Right lobe of liver (tissue), 6 donors: ENCODE measurements at regions of chr5 and their contacts with region 1.

Region 1: DNA sequence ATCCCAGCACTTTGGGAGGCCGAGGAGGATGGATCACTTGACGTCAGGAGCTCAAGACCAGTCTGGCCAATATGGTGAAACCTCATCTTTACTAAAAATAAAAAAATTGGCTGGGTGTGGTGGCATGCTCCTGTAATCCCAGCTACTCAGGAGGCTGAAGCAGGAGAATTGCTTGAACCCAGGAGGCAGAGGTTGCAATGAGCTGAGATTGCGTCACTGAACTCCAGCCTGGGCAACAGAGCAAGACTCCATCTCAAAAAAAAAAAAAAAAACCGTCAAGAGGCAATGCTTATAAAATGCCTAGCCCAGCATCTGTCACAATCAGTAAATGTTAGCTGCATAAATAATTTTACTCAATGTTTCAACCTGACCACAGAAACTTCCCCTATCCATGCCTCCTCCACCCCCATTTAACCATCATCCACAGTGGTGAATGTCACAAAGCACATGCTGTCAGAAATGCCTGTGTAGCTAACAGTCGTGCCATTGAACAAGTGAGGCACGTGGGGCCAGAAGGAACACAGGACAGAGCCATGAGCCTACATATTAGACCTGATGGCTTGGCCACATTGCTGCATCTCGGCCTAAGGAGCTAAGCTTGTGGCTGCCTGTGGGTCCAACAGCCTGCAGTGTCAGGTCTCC is 16.8 kb upstream of the TCOF1 start:
- DNase-seq: no peak
- ATAC-seq: no peak
- H3K4me3 ChIP-seq: no peak overlapping the region
- H3K27ac ChIP-seq: no peak overlapping the region
- H3K4me1 ChIP-seq: no peaks in the 10 kb centered on the region
- H3K27me3 ChIP-seq: no peaks in the 10 kb centered on the region
- CTCF ChIP-seq: no peak
- POLR2A ChIP-seq: no peak

Region 2: GRCh38 chr5:150161242-150162141 is 179.2 kb before region 1 on chr5:
- intact Hi-C with region 1: loop called in 1 of 2 experiments (anchors 10 kb)
- DNase-seq: peak; percentile 77 to 86 (median 83)
- ATAC-seq: peak; percentile 91 to 95 (median 94)
- H3K4me3 ChIP-seq: no peak overlapping the region
- H3K27ac ChIP-seq: no peak overlapping the region
- H3K4me1 ChIP-seq: no peaks in the 10 kb centered on the region
- H3K27me3 ChIP-seq: no peaks in the 10 kb centered on the region
- CTCF ChIP-seq: peak; percentile 82 to 93 (median 86)
- POLR2A ChIP-seq: no peak